CD8-positive, alpha-beta memory T cell (primary cell): ENCODE measurements at regions of chr15 and their contacts with region 1.

Region 1: DNA sequence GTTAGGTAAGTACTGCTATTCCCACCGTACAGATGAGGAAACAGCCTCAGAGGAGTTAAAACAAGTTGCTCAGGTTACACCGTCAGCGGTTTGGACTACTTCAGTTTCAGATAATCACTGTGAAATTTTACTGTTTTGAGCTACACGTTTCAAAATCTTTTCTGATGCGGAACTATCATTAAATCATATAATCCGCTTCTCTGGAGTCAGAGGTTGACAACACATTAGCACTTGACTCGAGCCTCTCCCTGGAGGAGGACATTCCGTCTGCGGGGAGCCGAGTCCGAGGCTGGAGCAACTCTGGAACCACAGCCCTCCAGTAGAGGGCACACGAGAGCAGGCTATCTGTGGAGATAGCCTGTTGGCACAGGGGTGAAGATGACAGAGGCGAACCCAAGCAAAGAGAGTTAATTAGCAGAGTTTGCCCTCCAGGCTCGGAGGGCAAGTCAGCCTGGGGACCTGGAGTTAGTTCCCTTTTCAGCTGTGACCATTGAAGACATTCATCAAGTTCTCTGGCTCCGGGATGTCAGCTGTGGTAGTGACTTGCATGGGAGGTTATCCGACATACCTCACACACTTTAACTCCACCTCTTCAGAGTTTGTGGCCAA is 131.2 kb downstream of the IGF1R start:
- DNase-seq: peak; percentile 45 to 68 (median 56)
- H3K4me3 ChIP-seq: no peak overlapping the region
- H3K4me3 Mint-ChIP-seq: peak overlapping the region in 4 of 7 donors; percentile 38 to 70 (median 56)
- H3K27ac ChIP-seq: no peak overlapping the region
- H3K27ac Mint-ChIP-seq: peak overlapping the region in 3 of 8 donors; percentile 1 to 84 (median 60)
- H3K4me1 ChIP-seq: peaks cover 17% of the 10 kb centered on the region
- H3K4me1 Mint-ChIP-seq: peaks cover 19 to 25% (median 23%) of the 10 kb centered on the region in 3 donors
- H3K27me3 ChIP-seq: no peaks in the 10 kb centered on the region
- H3K27me3 Mint-ChIP-seq: peaks cover 1 to 22% of the 10 kb centered on the region in 2 donors

Region 2: DNA sequence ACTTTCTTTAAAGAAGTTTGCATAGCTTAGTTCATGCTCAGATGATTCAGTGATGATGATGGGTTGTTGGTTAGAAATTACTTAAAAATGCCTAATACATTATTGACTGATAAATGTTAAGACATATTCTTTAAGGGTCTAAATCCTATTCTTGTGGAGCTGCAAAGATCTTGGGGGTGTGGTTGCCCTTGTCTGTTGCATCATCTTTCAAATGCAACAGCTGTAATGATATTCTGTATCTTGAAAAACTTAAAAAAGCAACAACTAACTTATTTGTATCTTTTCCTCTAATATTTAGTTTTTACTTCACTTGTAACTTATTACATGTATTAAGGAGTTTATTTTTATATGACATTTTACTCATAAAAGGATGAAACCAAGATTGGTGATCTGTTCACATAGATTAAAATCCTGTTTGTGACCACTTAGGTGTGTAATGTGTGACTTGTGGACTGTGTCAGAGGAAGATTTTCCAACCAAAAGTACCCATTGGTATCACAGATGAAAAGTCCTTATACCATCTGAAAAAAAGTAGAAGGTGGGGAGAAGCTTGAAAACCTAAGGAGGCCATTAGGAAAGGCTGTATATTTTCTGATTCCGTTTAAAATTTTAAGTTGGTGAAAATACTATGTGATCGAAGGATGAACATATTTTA is 11.6 kb after region 1 on chr15:
- CTCF ChIA-PET with region 1: interaction called, 12 read pairs
- POLR2A ChIA-PET with region 1: no interaction called
- DNase-seq: no peak
- H3K4me3 ChIP-seq: no peak overlapping the region
- H3K4me3 Mint-ChIP-seq: no peak overlapping the region
- H3K27ac ChIP-seq: no peak overlapping the region
- H3K27ac Mint-ChIP-seq: no peak overlapping the region
- H3K4me1 ChIP-seq: peaks cover 12% of the 10 kb centered on the region
- H3K4me1 Mint-ChIP-seq: peaks cover 0 to 4% (median 0%) of the 10 kb centered on the region in 3 donors
- H3K27me3 ChIP-seq: no peaks in the 10 kb centered on the region
- H3K27me3 Mint-ChIP-seq: peaks cover 9 to 12% of the 10 kb centered on the region in 2 donors

Region 3: DNA sequence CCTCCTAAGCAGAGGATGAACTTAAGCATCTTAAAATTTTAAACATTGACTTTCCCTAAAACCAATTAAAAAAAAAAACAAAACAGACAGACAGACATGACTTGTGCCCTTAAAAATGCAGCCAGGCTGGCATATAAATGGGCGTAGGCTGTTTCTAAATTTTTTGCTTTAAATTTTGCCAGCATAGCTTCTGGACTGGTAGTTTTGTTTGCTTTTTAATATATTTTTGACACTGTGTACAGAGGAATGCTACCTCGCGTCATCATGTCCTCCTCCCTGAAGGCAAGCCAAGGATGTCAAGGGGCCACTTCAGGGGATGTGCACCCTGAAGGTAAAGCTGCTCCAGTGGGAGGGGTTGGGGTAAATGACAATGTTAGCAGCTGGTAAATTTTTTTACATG is 93.2 kb after region 1 on chr15:
- CTCF ChIA-PET with region 1: no interaction called
- POLR2A ChIA-PET with region 1: no interaction called
- DNase-seq: no peak
- H3K4me3 ChIP-seq: no peak overlapping the region
- H3K4me3 Mint-ChIP-seq: no peak overlapping the region
- H3K27ac ChIP-seq: no peak overlapping the region
- H3K27ac Mint-ChIP-seq: peak overlapping the region in 1 of 8 donors; percentile 14
- H3K4me1 ChIP-seq: peaks cover 14% of the 10 kb centered on the region
- H3K4me1 Mint-ChIP-seq: peaks cover 0 to 5% (median 3%) of the 10 kb centered on the region in 3 donors
- H3K27me3 ChIP-seq: no peaks in the 10 kb centered on the region
- H3K27me3 Mint-ChIP-seq: peaks cover 4 to 18% of the 10 kb centered on the region in 2 donors

Region 4: GRCh38 chr15:98914626-98915025 is 135.1 kb after region 1 on chr15:
- CTCF ChIA-PET with region 1: no interaction called
- POLR2A ChIA-PET with region 1: no interaction called
- DNase-seq: no peak
- H3K4me3 ChIP-seq: no peak overlapping the region
- H3K4me3 Mint-ChIP-seq: no peak overlapping the region
- H3K27ac ChIP-seq: no peak overlapping the region
- H3K27ac Mint-ChIP-seq: peak overlapping the region in 1 of 8 donors; percentile 63
- H3K4me1 ChIP-seq: no peaks in the 10 kb centered on the region
- H3K4me1 Mint-ChIP-seq: peaks cover 0 to 6% (median 2%) of the 10 kb centered on the region in 3 donors
- H3K27me3 ChIP-seq: no peaks in the 10 kb centered on the region
- H3K27me3 Mint-ChIP-seq: peaks cover 0 to 4% of the 10 kb centered on the region in 2 donors